ENCODE measurements at regions of chr12 and their contacts with region 1.

Region 1: DNA sequence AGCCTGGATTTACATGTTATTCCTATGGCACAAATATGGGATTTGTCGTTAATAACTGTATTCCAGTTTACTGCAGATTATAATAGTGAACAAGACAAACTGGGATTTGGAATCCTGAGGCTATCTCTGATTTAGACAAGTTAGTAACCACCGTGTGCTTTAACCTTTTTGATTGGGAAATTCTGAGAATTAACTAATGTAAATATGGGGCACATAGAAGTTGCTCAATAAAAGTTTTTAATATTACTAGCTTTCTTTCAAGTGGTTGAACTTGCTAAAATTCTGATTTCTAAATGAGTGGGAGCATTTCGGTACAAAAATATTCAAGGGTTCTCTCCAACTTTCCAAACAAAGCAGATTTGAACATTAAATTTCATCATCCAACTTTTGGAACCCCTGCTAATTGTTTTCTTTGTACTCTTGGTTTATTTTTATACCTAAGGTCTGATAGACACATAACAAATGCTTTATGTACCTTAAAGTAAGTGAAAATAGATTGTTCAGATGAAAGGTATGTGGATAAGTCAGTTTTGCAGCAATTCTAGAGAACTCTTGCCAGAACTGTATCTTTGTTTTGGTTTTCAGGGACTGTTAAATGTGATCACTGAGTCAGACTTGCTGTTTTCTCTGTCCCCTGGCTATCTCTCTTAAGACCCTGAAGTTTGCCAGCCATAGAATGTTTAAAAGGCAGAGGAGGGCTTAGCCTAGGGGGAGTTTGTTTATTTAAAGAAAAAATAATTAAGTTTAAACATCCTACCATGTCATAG is 57.5 kb downstream of the FRS2 start:
- DNase-seq: no peak
- ATAC-seq: peak; percentile 26; the same call in 1 of the 3 replicates
- H3K4me3 ChIP-seq: no peak overlapping the region
- H3K27ac ChIP-seq: no peak overlapping the region
- H3K4me1 ChIP-seq: peaks cover 3% of the 10 kb centered on the region; the same call in 1 of the 2 replicates
- H3K27me3 ChIP-seq: no peaks in the 10 kb centered on the region
- CTCF ChIP-seq: no peak
- EP300 ChIP-seq: no peak
- POLR2A ChIP-seq: no peak
- RAD21 ChIP-seq: no peak

Region 2: DNA sequence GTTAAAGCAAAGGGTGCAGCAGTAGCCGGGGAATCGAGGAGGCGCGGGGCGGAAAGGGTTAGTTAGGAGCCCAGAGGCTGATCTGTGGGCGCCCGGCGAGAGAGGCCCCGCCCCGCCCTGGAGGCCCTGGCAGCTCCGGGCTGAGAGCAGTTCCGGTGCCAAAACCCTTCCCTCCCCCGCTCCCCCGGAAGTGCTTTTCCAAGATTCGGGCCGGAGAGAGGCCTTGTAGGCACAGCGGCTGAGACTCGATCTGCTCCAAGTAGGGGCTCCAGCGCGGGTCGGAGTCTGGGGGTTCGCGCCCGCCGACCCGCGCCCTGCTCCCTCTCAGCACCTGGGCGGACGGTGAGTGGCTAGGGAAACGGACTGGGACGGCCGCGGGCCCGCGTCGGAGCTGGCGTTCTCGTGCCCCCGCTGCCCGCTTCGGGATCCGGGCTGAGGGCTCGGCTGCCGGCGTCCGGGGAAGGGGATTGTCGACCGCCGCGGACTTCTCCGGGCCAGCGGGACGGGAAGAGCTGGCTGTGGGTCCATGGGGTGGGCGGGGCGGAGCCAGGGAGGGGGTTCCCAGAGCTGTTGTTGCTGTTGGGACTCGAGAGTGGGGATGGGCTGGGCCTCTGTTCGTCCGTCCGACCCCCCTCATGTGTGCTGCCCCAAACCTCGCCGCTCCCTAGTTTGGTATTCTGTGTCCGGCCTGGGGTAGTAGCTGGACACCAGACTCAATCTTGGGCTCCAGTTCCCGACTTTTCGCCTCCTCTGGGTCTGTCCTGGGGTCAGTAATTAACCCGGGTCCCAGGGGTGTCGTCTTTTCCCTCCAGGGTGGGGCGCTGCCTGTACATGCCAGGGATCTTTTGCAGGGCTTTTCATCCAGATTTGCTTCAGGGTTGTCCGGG is 57.3 kb before region 1 on chr12 and contains the start of gene FRS2:
- CTCF ChIA-PET with region 1: no interaction called
- POLR2A ChIA-PET with region 1: no interaction called
- RAD21 ChIA-PET with region 1: no interaction called
- SMC1A ChIA-PET with region 1: interaction called, 3 read pairs
- in situ Hi-C with region 1: no loop called
- intact Hi-C with region 1: loop called (anchors 5 kb)
- DNase-seq: peak; percentile 19
- ATAC-seq: peak; percentile 98
- H3K4me3 ChIP-seq: peak within 1 kb of the TSS; percentile 86
- H3K27ac ChIP-seq: peak within 1 kb of the TSS; percentile 91
- H3K4me1 ChIP-seq: peaks cover 8% of the 10 kb centered on the region; the same call in 1 of the 2 replicates
- H3K27me3 ChIP-seq: no peaks in the 10 kb centered on the region
- CTCF ChIP-seq: peak; percentile 16 to 44 (median 38); a peak in 3 of 6 replicates
- EP300 ChIP-seq: no peak
- POLR2A ChIP-seq: peak; percentile 80
- RAD21 ChIP-seq: peak; percentile 71
- polyA plus RNA-seq, gene FRS2: 1.1 TPM